ENCODE measurements at regions of chr1 and their contacts with region 1.

Region 1: GRCh38 chr1:41474490-41475271 is 9.8 kb downstream of the EDN2 start:
- DNase-seq: no peak
- H3K4me3 ChIP-seq: no peak overlapping the region
- H3K27ac ChIP-seq: no peak overlapping the region
- H3K4me1 ChIP-seq: peaks cover 24% of the 10 kb centered on the region
- H3K27me3 ChIP-seq: no peaks in the 10 kb centered on the region
- CTCF ChIP-seq: no peak

Region 2: GRCh38 chr1:41795205-41795762 is 320.6 kb after region 1 on chr1:
- CTCF ChIA-PET with region 1: no interaction called
- dilution Hi-C with region 1: no loop called
- in situ Hi-C with region 1: no loop called
- intact Hi-C with region 1: loop called (anchors 5 kb)
- DNase-seq: peak; percentile 43
- H3K4me3 ChIP-seq: no peak overlapping the region
- H3K27ac ChIP-seq: no peak overlapping the region
- H3K4me1 ChIP-seq: peaks cover 11% of the 10 kb centered on the region
- H3K27me3 ChIP-seq: no peaks in the 10 kb centered on the region
- CTCF ChIP-seq: peak; percentile 39 to 70